Heart right ventricle (tissue), 16 donors: ENCODE measurements at regions of chr9 and their contacts with region 1.

Region 1: DNA sequence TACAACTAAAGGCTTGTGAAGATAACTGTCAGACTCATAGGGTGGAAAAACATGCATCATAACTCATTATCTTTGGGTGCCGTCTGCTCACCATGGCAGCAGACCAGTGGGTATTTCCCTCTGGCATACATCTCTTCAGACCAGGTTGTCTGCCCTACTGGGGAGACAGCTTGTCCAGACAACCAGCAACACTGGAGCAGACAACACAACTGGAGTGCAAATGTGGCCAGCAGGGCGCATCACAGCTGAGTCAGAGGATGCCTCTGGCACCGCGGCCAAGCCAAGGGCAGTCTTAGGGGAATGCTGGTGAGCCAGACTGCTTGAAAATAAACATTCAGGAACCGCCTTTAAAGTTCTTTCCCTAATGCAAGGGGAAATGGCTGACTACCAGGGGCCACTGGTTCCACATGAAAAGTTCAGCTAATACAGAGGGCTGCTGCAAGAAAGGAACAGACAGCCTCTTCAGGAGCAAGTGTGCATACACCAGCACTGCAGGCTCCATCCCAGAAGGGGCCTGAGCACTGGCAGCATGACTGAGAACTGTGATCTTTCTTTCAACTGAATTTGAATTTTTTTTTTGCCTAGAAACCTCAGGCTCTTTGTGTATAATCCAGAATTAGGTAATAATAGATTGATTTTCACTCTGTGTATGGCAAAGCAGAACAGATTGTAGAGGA is 77.3 kb downstream of the MAMDC2 start:
- DNase-seq: peak; percentile 27 to 66
- ATAC-seq: peak in 7 of 8 donors; percentile 68 to 95 (median 81)
- H3K4me3 ChIP-seq: no peak overlapping the region
- H3K27ac ChIP-seq: peak overlapping the region in 4 of 10 donors; percentile 4 to 68 (median 40)
- H3K4me1 ChIP-seq: peaks cover 0 to 18% (median 0%) of the 10 kb centered on the region in 9 donors
- H3K27me3 ChIP-seq: no peaks in the 10 kb centered on the region
- CTCF ChIP-seq: peak in 4 of 9 donors; percentile 16 to 30 (median 24)

Region 2: DNA sequence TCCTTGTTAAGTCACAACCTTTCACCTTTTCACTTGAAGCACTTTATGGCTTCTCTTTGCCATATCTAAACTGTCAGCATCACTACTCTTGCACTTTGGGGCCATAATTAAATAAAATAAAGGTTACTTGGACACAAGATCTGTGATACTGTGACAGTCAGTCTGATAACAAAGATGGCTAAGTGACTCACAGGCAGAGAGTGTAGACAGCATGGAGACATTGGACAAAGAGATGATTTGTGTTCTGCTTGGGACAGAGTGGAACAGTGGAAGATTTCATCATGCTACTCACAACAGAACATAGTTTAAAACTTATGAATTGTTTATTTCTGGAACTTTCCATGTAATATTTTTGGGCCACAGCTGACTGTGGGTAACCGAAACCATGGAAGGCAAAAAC is 56.1 kb after region 1 on chr9:
- intact Hi-C with region 1: loop called in 1 of 10 experiments (anchors 10 kb)
- DNase-seq: no peak
- ATAC-seq: peak in 1 of 8 donors; percentile 37
- H3K4me3 ChIP-seq: no peak overlapping the region
- H3K27ac ChIP-seq: no peak overlapping the region
- H3K4me1 ChIP-seq: no peaks in the 10 kb centered on the region
- H3K27me3 ChIP-seq: no peaks in the 10 kb centered on the region
- CTCF ChIP-seq: no peak